Right ventricle myocardium inferior (tissue), 1 donor: ENCODE measurements at regions of chr5 and their contacts with region 1.

Region 1: GRCh38 chr5:158174918-158175851 is 316.2 kb upstream of the CLINT1 start:
- DNase-seq: peak; percentile 72
- ATAC-seq: peak; percentile 88

Region 2: DNA sequence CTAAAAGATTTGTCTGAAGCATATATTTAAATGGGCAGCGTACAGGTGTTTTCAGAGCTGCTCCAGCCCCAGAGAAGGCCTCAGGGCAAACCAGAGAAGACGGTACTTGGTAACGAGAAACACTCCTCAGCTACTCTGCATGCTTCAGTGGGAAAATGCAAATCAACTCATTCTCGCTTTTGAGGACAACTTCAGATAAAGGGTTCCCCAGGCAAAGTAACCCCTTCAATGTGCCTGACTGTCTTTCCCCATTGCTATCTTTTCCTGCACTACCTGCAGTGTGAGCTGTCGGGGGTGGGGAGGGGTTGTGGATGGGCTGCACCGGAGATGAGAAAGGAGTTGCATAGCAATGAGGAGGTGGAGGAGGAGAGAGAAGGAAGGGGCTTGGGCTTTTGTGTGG is 23.5 kb after region 1 on chr5:
- intact Hi-C with region 1: no loop called
- DNase-seq: no peak
- ATAC-seq: no peak

Region 3: GRCh38 chr5:158423623-158424200 is 248.5 kb after region 1 on chr5:
- intact Hi-C with region 1: loop called (anchors 5 kb)
- DNase-seq: no peak
- ATAC-seq: peak; percentile 51

Region 4: GRCh38 chr5:158485604-158486081 is 310.5 kb after region 1 on chr5:
- intact Hi-C with region 1: loop called (anchors 10 kb)
- DNase-seq: no peak
- ATAC-seq: peak; percentile 78

Region 5: GRCh38 chr5:158695595-158696330 is 520.6 kb after region 1 on chr5:
- intact Hi-C with region 1: loop called (anchors 1 kb)
- DNase-seq: peak; percentile 84
- ATAC-seq: peak; percentile 62

Region 6: DNA sequence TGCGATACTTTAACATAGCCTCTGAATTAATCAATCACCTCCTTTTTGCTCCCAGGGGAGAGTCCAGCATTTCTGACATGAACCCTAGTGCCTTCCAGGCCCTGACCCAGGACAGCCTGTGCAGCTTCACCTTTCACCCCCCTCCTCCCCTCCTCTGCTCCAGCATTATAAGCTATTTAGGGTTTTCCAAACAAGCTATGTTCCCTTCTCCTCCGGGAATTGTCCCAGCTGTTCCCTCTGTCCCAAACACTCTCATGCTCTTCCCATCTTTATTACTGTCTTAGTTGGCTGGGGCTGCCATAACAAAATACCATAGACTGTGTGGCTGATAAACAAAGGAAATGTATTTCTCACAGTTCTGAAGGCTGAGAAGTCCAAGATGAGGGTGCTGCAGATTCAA is 763.0 kb after region 1 on chr5:
- intact Hi-C with region 1: loop called (anchors 10 kb)
- DNase-seq: no peak
- ATAC-seq: peak; percentile 60

Region 7: DNA sequence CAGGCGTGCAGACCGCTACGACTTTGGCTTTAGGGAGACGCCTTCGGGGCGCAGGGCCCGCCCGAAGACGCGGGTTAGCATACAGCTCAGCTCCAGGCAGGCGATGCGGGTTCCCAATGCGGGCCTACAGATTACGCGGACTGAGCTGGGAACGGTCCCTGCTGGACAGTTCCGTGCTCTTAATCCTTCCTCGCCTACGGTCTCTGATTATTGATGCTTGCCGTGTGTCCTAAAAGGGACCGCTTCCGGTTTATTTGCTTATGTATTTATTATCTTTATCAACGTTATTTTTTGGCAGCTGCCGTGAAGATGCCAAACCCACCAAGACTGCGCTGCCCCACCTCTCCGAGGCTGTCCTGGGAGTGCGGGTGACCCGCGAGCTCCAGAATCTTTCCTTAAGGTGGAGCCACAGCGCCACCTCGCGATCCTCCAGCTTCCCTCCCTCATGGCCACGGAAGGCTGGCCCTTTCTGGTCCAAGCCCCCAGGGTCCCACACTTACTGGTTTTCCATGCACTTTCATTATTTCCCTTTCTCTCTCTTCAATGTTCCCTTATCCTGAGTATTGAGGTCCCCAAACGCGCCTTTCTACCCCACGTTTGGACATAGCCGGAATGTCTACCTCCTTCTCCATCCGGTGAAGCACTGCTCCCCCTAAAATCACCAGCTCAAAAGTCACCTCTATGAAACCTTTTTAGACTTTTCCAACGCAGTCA is 931.5 kb after region 1 on chr5:
- intact Hi-C with region 1: loop called (anchors 1 kb)
- DNase-seq: peak; percentile 91
- ATAC-seq: peak; percentile 83

Region 8: GRCh38 chr5:159133041-159133741 is 958.0 kb after region 1 on chr5:
- intact Hi-C with region 1: loop called (anchors 1 kb)
- DNase-seq: no peak
- ATAC-seq: peak; percentile 83